ENCODE measurements at regions of chr17 and their contacts with region 1.

Region 1: GRCh38 chr17:50478391-50479381 is at the start of gene RSAD1:
- DNase-seq: peak; percentile 88
- H3K4me3 Mint-ChIP-seq: peak within 1 kb of the TSS; percentile 81
- H3K27ac Mint-ChIP-seq: peak within 1 kb of the TSS; percentile 95
- H3K4me1 Mint-ChIP-seq: peaks cover 25% of the 10 kb centered on the region
- H3K27me3 Mint-ChIP-seq: peaks cover 5% of the 10 kb centered on the region
- total RNA-seq, gene RSAD1: 39.2 to 40.4 TPM

Region 2: DNA sequence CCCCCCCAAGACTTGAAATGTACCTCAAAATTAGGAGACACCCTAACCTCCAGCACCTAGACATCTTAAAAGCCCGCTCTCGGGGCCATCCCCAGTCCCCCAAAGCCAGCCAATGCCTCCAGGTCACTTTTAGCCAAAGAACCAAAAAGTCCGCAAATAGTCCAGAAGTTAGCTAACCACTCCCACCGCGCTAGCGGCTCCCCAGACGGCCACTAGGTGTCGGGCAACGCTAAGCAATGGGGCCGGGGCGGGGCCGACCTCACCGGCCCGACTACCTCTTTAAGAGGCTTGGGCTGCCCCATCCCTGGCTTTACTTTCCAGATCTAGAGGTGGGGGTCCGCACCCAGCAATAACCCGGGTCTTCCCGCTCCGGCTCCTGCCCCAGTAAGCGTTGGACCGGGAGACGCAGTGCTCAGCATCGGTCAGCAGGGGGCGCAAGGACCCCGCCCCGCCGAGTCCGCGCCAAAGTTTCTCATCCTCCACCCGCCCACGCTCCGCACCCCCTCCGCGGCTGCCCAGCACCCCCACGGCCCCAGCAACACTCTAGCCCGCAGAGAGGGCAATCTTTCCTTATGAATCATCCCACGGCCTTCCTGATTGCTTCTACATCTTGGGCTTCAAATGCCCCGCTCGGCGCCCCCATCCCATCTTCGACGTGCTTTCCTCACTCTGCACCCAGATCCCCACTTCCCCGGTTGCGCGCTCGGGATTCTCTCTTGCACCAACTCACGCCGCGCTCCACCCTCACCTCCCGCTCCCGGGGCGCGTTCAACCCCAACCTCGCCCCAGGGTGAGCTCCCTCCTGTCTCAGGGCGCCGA is 278.0 kb before region 1 on chr17:
- CTCF ChIA-PET with region 1: interaction called, 4 read pairs
- intact Hi-C with region 1: loop called (anchors 1 kb)
- DNase-seq: peak; percentile 88
- H3K4me3 Mint-ChIP-seq: peak overlapping the region; percentile 56
- H3K27ac Mint-ChIP-seq: no peak overlapping the region
- H3K4me1 Mint-ChIP-seq: peaks cover 17% of the 10 kb centered on the region
- H3K27me3 Mint-ChIP-seq: peaks cover 35% of the 10 kb centered on the region

Region 3: GRCh38 chr17:50397111-50397918 is 81.4 kb before region 1 on chr17 and contains the start of gene LRRC59:
- CTCF ChIA-PET with region 1: interaction called, 11 read pairs
- intact Hi-C with region 1: loop called (anchors 1 kb)
- DNase-seq: peak; percentile 92
- H3K4me3 Mint-ChIP-seq: peak within 1 kb of the TSS; percentile 92
- H3K27ac Mint-ChIP-seq: peak within 1 kb of the TSS; percentile 79
- H3K4me1 Mint-ChIP-seq: peaks cover 32% of the 10 kb centered on the region
- H3K27me3 Mint-ChIP-seq: no peaks in the 10 kb centered on the region
- total RNA-seq, gene LRRC59: 48.1 to 50.1 TPM

Region 4: GRCh38 chr17:50541716-50542688 is 63.3 kb after region 1 on chr17:
- CTCF ChIA-PET with region 1: interaction called, 13 read pairs
- intact Hi-C with region 1: loop called (anchors 1 kb)
- DNase-seq: peak; percentile 81
- H3K4me3 Mint-ChIP-seq: peak overlapping the region; percentile 64
- H3K27ac Mint-ChIP-seq: no peak overlapping the region
- H3K4me1 Mint-ChIP-seq: peaks cover 12% of the 10 kb centered on the region
- H3K27me3 Mint-ChIP-seq: peaks cover 2% of the 10 kb centered on the region

Region 5: DNA sequence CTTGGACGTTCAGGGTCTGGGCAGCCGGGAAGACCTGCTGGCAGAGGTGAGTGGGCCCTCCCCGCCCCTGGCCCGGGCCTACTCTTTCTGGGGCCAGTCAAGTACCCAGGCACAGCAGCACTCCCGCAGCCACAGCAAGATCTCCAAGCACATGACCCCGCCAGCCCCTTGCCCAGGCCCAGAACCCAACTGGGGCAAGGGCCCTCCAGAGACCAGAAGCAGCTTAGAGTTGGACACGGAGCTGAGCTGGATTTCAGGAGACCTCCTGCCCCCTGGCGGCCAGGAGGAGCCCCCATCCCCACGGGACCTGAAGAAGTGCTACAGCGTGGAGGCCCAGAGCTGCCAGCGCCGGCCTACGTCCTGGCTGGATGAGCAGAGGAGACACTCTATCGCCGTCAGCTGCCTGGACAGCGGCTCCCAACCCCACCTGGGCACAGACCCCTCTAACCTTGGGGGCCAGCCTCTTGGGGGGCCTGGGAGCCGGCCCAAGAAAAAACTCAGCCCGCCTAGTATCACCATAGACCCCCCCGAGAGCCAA is 147.4 kb after region 1 on chr17:
- CTCF ChIA-PET with region 1: interaction called, 11 read pairs
- intact Hi-C with region 1: loop called (anchors 1 kb)
- DNase-seq: peak; percentile 76
- H3K4me3 Mint-ChIP-seq: no peak overlapping the region
- H3K27ac Mint-ChIP-seq: no peak overlapping the region
- H3K4me1 Mint-ChIP-seq: no peaks in the 10 kb centered on the region
- H3K27me3 Mint-ChIP-seq: peaks cover 33% of the 10 kb centered on the region

Region 6: DNA sequence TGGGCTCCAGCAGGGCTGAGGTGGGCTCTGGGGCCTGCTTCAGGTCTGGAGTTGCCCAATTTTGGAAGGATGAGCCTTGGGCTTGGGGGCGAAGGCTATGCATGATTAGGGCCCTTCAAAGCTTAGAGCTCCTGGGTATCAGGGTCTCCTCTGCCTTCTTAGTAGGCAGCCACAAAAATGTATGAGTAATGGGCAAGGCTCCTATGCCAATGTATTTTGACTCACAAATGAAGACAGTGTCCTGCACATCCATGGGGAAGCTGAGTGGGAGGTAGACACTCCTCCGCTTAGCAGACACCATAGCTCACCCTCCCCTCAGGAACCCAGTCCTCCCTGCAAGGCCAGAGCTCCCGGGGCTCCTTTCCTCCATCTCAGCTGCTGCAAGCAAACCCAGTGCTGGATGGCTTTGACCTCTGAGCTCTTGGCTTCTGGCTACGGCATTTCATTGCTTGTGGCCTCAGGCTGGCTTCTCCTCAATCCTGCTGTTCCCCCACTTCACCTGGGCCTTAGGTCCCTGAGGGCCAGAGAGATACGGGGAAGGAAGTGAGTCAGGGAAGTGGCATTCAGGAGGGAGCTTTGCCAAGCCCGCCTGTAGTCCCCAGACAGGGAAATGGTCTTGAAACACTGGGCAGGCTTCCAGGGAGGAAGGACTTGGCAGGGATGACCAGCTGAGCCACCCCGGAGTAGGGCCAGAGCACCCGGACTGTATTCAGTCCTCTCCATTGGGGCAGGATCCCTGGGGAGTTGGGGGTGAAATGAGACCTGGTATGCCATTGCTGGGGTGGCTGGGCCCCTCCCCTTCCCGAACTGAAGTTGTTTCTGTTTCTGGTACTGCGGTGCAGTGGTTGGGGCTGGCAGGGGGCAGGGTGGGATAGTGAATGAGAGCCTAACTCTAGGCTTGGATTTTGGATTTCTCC is 160.4 kb after region 1 on chr17:
- CTCF ChIA-PET with region 1: no interaction called
- intact Hi-C with region 1: no loop called
- DNase-seq: no peak
- H3K4me3 Mint-ChIP-seq: no peak overlapping the region
- H3K27ac Mint-ChIP-seq: no peak overlapping the region
- H3K4me1 Mint-ChIP-seq: no peaks in the 10 kb centered on the region
- H3K27me3 Mint-ChIP-seq: peaks cover 29% of the 10 kb centered on the region

Region 7: GRCh38 chr17:50841949-50842354 is 363.3 kb after region 1 on chr17:
- CTCF ChIA-PET with region 1: no interaction called
- intact Hi-C with region 1: loop called (anchors 5 kb)
- DNase-seq: peak; percentile 73
- H3K4me3 Mint-ChIP-seq: no peak overlapping the region
- H3K27ac Mint-ChIP-seq: no peak overlapping the region
- H3K4me1 Mint-ChIP-seq: peaks cover 3% of the 10 kb centered on the region
- H3K27me3 Mint-ChIP-seq: no peaks in the 10 kb centered on the region